ENCODE measurements at regions of chr22 and their contacts with region 1.

Region 1: DNA sequence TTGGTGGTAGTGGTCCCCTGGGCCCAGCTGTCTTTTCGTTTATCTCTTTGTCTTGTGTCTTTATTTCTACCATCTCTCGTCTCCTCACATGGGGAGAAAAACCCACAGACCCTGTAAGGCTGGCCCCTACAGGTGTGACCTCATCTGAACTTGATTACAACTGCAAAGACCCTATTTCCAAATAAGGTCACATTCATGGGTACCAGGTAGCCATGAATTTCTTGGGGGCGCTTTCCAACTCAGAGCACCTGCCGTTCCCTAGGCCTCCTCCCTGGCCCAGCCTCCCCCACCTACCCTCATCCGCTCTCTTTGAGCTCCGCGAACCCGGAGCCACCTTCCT is 14.0 kb upstream of the RRP7A start:
- DNase-seq: peak in 1 of 9 experiments; percentile 38
- ATAC-seq: peak; percentile 27
- H3K4me3 ChIP-seq: peak overlapping the region; percentile 24 to 58
- H3K4me3 Mint-ChIP-seq: peak overlapping the region; percentile 84
- H3K27ac ChIP-seq: peak overlapping the region; percentile 56 to 93
- H3K27ac Mint-ChIP-seq: peak overlapping the region; percentile 90
- H3K4me1 ChIP-seq: peaks cover 6% of the 10 kb centered on the region
- H3K4me1 Mint-ChIP-seq: peaks cover 12% of the 10 kb centered on the region
- H3K27me3 ChIP-seq: no peaks in the 10 kb centered on the region
- H3K27me3 Mint-ChIP-seq: no peaks in the 10 kb centered on the region
- CTCF ChIP-seq: no peak

Region 2: GRCh38 chr22:42520663-42521546 is 12.7 kb before region 1 on chr22:
- CTCF ChIA-PET with region 1: interaction called, 3 read pairs
- POLR2A ChIA-PET with region 1: no interaction called
- intact Hi-C with region 1: loop called in 1 of 2 experiments (anchors 1 kb)
- DNase-seq: no peak
- ATAC-seq: no peak
- H3K4me3 ChIP-seq: no peak overlapping the region
- H3K4me3 Mint-ChIP-seq: peak overlapping the region; percentile 97
- H3K27ac ChIP-seq: no peak overlapping the region
- H3K27ac Mint-ChIP-seq: no peak overlapping the region
- H3K4me1 ChIP-seq: peaks cover 16% of the 10 kb centered on the region
- H3K4me1 Mint-ChIP-seq: peaks cover 17% of the 10 kb centered on the region
- H3K27me3 ChIP-seq: no peaks in the 10 kb centered on the region
- H3K27me3 Mint-ChIP-seq: no peaks in the 10 kb centered on the region
- CTCF ChIP-seq: no peak

Region 3: DNA sequence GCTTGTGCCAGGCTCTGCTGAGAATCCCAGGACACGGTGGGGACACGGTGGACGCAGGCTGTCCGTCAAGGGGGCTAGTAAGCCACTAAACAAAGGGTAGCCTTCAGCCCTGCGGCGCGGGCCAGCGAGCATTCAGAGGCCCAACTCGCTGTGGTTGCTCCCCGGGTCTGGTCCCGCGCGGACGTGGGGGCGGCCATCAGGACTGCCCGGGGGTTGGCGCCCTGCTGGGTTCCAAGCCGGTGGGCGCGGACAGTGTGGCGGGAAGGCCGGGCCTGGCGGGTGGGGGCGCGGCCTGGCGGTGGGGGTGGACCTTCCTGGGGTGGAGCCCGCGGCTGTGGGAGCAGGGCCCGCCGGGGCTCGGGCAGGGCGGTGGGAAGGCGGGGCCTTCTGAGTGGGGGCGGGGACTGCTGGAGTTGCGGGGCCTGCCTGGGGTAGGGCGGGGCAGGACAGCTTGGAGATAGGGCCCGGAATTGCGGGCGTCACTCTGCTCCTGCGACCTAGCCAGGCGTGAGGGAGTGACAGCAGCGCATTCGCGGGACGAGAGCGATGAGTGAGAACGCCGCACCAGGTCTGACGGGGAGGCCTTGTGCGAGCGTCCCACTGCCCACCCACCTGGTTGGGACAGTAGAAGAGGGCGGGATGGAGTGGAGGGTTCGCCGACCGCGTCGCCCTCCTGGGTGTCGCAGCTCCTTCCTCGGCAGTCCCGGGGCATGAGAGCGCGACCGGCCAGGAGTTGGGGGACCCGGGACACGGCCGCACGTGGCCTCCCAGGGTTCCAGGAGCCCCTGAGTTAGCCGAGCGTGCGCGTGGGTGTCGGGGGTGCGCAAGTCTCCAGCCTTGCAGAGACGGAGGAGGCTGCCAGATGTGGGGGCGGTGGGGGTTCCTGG is 20.1 kb after region 1 on chr22 and contains the start of gene SERHL2:
- CTCF ChIA-PET with region 1: interaction called, 6 read pairs
- POLR2A ChIA-PET with region 1: no interaction called
- intact Hi-C with region 1: loop called in 1 of 2 experiments (anchors 2 kb)
- DNase-seq: peak; percentile 61 to 93 (median 82)
- ATAC-seq: peak; percentile 95
- H3K4me3 ChIP-seq: peak within 1 kb of the TSS; percentile 54 to 81
- H3K4me3 Mint-ChIP-seq: peak within 1 kb of the TSS; percentile 81
- H3K27ac ChIP-seq: no peak within 1 kb of the TSS
- H3K27ac Mint-ChIP-seq: no peak within 1 kb of the TSS
- H3K4me1 ChIP-seq: peaks cover 12% of the 10 kb centered on the region
- H3K4me1 Mint-ChIP-seq: peaks cover 16% of the 10 kb centered on the region
- H3K27me3 ChIP-seq: no peaks in the 10 kb centered on the region
- H3K27me3 Mint-ChIP-seq: no peaks in the 10 kb centered on the region
- CTCF ChIP-seq: no peak
- total RNA-seq, gene SERHL2: 0.42 TPM in 1 of 2 experiments, not detected in the other